ENCODE measurements at regions of chr17 and their contacts with region 1.

Region 1: GRCh38 chr17:56136301-56136700 is 17.0 kb upstream of the ANKFN1 start:
- DNase-seq: no peak
- H3K4me3 ChIP-seq: no peak overlapping the region
- H3K27ac ChIP-seq: no peak overlapping the region
- H3K4me1 ChIP-seq: peaks cover 0 to 9% (median under 1%) of the 10 kb centered on the region in 4 donors
- H3K27me3 ChIP-seq: no peaks in the 10 kb centered on the region
- CTCF ChIP-seq: no peak
- EP300 ChIP-seq: no peak
- POLR2A ChIP-seq: no peak

Region 2: GRCh38 chr17:55567240-55568214 is 568.8 kb before region 1 on chr17:
- intact Hi-C with region 1: no loop called
- DNase-seq: peak; percentile 82
- H3K4me3 ChIP-seq: no peak overlapping the region
- H3K27ac ChIP-seq: peak overlapping the region in 3 of 4 donors; percentile 30 to 48 (median 38)
- H3K4me1 ChIP-seq: peaks cover 0 to 18% (median 12%) of the 10 kb centered on the region in 4 donors
- H3K27me3 ChIP-seq: no peaks in the 10 kb centered on the region
- CTCF ChIP-seq: no peak
- EP300 ChIP-seq: no peak
- POLR2A ChIP-seq: no peak

Region 3: GRCh38 chr17:56298846-56299245 is 162.5 kb after region 1 on chr17:
- intact Hi-C with region 1: no loop called
- DNase-seq: no peak
- H3K4me3 ChIP-seq: no peak overlapping the region
- H3K27ac ChIP-seq: no peak overlapping the region
- H3K4me1 ChIP-seq: peaks cover 0 to 6% (median 0%) of the 10 kb centered on the region in 4 donors
- H3K27me3 ChIP-seq: no peaks in the 10 kb centered on the region
- CTCF ChIP-seq: no peak
- EP300 ChIP-seq: no peak
- POLR2A ChIP-seq: no peak

Region 4: DNA sequence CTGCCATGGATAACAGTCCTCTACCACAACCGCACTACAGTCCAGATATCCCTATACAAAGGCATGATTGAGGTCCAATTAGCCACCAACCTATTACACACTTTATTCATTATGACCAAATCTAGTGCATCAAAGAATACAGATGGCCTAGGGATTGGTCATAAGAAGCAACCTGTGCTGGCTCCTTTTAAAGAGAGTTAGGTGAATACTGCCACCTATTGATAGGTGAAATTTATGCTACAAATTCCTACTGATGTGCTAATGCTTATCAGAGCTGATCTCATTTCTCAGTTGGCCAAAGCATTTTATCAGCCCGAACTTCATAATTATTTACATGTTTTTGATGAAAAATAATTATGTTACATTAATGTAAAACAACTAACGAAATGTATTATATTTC is 183.2 kb after region 1 on chr17:
- intact Hi-C with region 1: loop called (anchors 10 kb)
- DNase-seq: no peak
- H3K4me3 ChIP-seq: no peak overlapping the region
- H3K27ac ChIP-seq: no peak overlapping the region
- H3K4me1 ChIP-seq: no peaks in the 10 kb centered on the region
- H3K27me3 ChIP-seq: peaks cover 0 to 4% (median 0%) of the 10 kb centered on the region in 3 donors
- CTCF ChIP-seq: peak in 3 of 4 experiments; percentile 13 to 44 (median 28)
- EP300 ChIP-seq: no peak
- POLR2A ChIP-seq: no peak